Prostate gland (tissue), 2 donors: ENCODE measurements at regions of chr4 and their contacts with region 1.

Region 1: GRCh38 chr4:41281038-41281634 is 24.4 kb downstream of the UCHL1 start:
- DNase-seq: peak; percentile 72
- H3K4me3 ChIP-seq: no peak overlapping the region
- H3K27ac ChIP-seq: no peak overlapping the region
- H3K4me1 ChIP-seq: no peaks in the 10 kb centered on the region
- H3K27me3 ChIP-seq: no peaks in the 10 kb centered on the region
- CTCF ChIP-seq: peak; percentile 60 to 94 (median 88)
- POLR2A ChIP-seq: no peak

Region 2: DNA sequence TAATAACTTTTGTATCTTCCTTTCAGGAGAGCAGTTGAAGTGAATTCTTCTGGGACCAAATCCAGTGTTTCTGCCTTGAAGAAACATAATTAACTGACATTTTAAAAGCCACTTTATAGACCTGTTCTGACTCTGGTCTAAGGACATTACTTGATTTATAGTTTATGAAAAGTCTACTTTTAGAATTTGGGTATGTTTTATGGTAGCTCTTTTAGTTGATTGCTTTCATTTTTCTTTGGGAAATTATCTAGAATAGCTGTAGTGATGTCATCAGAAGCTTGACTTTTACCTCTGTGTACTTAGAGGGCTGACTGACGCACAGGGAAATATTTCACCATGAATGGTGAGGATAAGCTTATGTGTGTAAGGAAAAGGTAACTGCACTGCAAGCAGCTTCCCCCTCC is 125.0 kb after region 1 on chr4:
- intact Hi-C with region 1: no loop called
- DNase-seq: no peak
- H3K4me3 ChIP-seq: no peak overlapping the region
- H3K27ac ChIP-seq: peak overlapping the region; percentile 29 to 56
- H3K4me1 ChIP-seq: no peaks in the 10 kb centered on the region
- H3K27me3 ChIP-seq: no peaks in the 10 kb centered on the region
- CTCF ChIP-seq: no peak
- POLR2A ChIP-seq: no peak

Region 3: GRCh38 chr4:41661442-41662076 is 380.4 kb after region 1 on chr4:
- intact Hi-C with region 1: loop called (anchors 1 kb)
- DNase-seq: peak; percentile 51
- H3K4me3 ChIP-seq: no peak overlapping the region
- H3K27ac ChIP-seq: no peak overlapping the region
- H3K4me1 ChIP-seq: no peaks in the 10 kb centered on the region
- H3K27me3 ChIP-seq: no peaks in the 10 kb centered on the region
- CTCF ChIP-seq: peak; percentile 76 to 89 (median 84)
- POLR2A ChIP-seq: no peak

Region 4: DNA sequence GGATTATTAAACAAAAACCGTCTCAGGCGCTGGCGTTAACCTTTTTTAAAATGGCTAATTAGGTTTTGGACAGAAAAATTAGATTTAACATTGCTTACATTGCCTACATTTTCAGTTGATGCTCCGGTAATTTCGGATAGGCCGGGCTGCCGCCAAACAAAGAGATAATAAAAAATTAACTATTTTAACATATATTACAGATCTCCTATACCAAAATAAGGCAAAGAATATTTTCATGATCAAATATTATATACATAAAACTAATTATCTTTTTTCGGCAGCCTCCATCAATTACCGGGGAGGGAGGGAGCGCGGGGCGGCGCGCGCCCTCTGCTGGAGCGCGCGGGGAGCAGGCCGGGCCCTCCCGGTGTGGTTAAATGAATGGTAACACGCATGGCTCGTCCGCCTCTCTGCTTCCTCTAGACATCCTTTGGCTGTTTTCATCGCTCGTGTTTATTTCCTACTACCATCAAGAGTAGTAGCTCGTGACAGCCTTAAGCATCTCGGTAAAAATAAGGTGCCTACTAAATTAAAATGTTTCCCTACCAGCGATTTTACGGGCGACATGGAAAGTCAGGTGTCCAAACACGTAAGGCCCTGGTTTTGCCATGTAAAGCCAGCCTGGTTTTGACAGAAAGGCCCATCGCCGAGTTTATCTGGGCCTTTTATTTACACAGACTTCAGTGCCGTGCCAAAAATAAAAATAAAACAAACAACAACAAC is 601.6 kb after region 1 on chr4:
- intact Hi-C with region 1: loop called (anchors 5 kb)
- DNase-seq: peak; percentile 15
- H3K4me3 ChIP-seq: peak overlapping the region in 1 of 2 donors; percentile 15
- H3K27ac ChIP-seq: no peak overlapping the region
- H3K4me1 ChIP-seq: peaks cover 14% of the 10 kb centered on the region
- H3K27me3 ChIP-seq: peaks cover 27% of the 10 kb centered on the region
- CTCF ChIP-seq: peak; percentile 62 to 71 (median 64)
- POLR2A ChIP-seq: no peak